AG04449 (cell line): ENCODE measurements at regions of chr17 and their contacts with region 1.

Region 1: DNA sequence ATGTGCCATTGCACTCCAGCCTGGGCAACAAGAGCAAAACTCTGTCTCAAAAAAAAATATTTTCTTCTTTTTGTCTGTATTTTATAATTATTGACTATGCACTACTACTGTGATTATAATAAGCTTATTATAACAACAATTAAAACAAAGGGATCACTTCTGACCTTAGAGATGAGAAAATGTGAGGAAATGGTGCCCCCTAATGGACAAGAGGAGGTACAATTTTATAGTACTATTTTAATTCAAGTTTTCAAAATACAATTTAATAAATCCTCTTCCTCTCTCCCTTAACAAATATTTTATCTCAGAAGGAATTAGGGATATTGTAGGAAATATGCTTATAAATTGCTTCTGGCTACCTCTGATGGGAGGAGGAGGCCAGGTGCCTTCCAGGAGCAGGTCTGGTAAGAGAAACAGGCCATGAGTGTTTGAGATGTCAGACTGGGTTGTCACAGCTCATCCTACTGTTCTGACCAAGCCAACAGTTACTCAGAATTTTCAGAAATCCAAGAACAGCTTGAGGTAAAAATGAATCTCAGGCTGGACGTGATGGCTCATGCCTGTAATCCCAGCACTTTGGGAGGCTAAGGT is 14.0 kb downstream of the VPS53 start:
- DNase-seq: no peak
- H3K4me3 ChIP-seq: no peak overlapping the region
- CTCF ChIP-seq: peak; percentile 27

Region 2: DNA sequence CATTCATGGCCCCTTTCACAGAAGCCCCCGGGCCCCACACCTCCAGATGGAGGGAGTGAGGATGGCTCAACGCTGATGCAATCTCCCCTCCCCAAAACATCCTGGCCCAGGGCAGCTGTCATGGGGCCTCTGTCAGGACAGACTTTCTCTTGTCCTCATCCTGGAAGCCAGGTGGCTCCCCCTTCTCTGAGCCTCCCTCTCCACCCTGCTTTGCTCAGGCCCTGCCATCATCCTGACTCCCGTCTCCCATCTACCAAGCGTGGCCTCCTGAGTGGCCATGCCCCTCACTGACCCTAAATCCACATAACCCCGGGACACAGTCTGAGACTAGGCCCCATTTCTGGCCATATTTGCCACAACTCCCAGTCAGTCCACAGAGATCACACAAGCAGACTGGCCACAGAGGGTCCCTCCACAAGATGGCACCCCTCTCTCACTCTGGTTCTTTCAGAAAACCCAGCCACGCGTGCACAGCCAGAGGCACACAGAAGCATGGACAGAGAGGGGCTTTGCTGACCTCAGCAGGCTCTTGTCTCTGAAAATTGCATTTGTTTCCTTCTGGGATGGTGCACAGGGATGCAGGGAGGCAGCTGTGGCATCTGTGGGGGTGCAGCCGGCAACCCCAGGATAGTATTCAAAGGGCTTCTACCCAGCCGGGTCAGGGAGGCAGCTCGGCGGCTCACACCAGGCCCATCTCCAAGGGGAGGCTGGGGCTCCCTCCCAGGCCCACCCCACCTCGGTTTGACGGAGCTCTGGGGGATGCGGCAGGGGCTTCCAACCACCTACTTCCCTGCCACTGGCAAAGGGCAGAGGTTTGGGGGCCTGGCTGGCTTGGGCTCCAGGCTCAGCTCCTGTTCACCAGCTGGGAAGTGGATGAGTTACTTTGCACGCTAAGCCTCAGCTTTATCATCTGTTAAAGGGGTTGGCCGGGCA is 536.0 kb before region 1 on chr17:
- CTCF ChIA-PET with region 1: interaction called, 19 read pairs
- POLR2A ChIA-PET with region 1: no interaction called
- DNase-seq: no peak
- H3K4me3 ChIP-seq: no peak overlapping the region
- CTCF ChIP-seq: peak; percentile 70

Region 3: GRCh38 chr17:416293-417206 is 284.0 kb before region 1 on chr17:
- CTCF ChIA-PET with region 1: interaction called, 533 read pairs
- POLR2A ChIA-PET with region 1: no interaction called
- DNase-seq: no peak
- H3K4me3 ChIP-seq: no peak overlapping the region
- CTCF ChIP-seq: no peak

Region 4: GRCh38 chr17:497241-498034 is 203.2 kb before region 1 on chr17:
- CTCF ChIA-PET with region 1: interaction called, 11 read pairs
- POLR2A ChIA-PET with region 1: no interaction called
- DNase-seq: no peak
- H3K4me3 ChIP-seq: peak overlapping the region; percentile 18; the same call in 1 of the 2 replicates
- CTCF ChIP-seq: no peak

Region 5: GRCh38 chr17:601244-601925 is 99.2 kb before region 1 on chr17:
- CTCF ChIA-PET with region 1: interaction called, 13 read pairs
- POLR2A ChIA-PET with region 1: no interaction called
- DNase-seq: no peak
- H3K4me3 ChIP-seq: no peak overlapping the region
- CTCF ChIP-seq: no peak

Region 6: GRCh38 chr17:716238-716637 is 15.6 kb after region 1 on chr17:
- CTCF ChIA-PET with region 1: interaction called, 31 read pairs
- POLR2A ChIA-PET with region 1: interaction called, 3 read pairs
- DNase-seq: no peak
- H3K4me3 ChIP-seq: no peak overlapping the region
- CTCF ChIP-seq: no peak